ENCODE measurements at regions of chr1 and their contacts with region 1.

Region 1: GRCh38 chr1:186700712-186701111 is 20.5 kb upstream of the PTGS2 start:
- DNase-seq: no peak
- CTCF ChIP-seq: no peak

Region 2: GRCh38 chr1:186618401-186619170 is 82.1 kb before region 1 on chr1:
- CTCF ChIA-PET with region 1: no interaction called
- POLR2A ChIA-PET with region 1: no interaction called
- DNase-seq: peak; percentile 77
- CTCF ChIP-seq: no peak

Region 3: GRCh38 chr1:186722711-186723309 is 22.1 kb after region 1 on chr1:
- CTCF ChIA-PET with region 1: interaction called, 11 read pairs
- POLR2A ChIA-PET with region 1: no interaction called
- DNase-seq: peak; percentile 31
- CTCF ChIP-seq: peak; percentile 56

Region 4: GRCh38 chr1:186875896-186876835 is 175.5 kb after region 1 on chr1:
- CTCF ChIA-PET with region 1: no interaction called
- POLR2A ChIA-PET with region 1: no interaction called
- DNase-seq: no peak
- CTCF ChIP-seq: no peak